Activated T-helper 2 cell treated with anti-CD3 and anti-CD28 coated beads, Interferon-gamma antibody, Interleukin-2, Interleukin-4, amounts not matched to agents 10 μg/mL and 5 μg/mL and 100 μg/mL, durations not matched to agents 14 hours and 24 hours and 36 hours (primary cell): ENCODE measurements at regions of chr19 and their contacts with region 1.

Region 1: GRCh38 chr19:44723952-44724319 is 24.6 kb upstream of the BCL3 start:
- DNase-seq: peak; percentile 72
- H3K4me3 Mint-ChIP-seq: no peak overlapping the region
- H3K27ac Mint-ChIP-seq: no peak overlapping the region
- H3K4me1 Mint-ChIP-seq: peaks cover 35% of the 10 kb centered on the region
- H3K27me3 Mint-ChIP-seq: no peaks in the 10 kb centered on the region

Region 2: GRCh38 chr19:44689056-44689895 is 34.7 kb before region 1 on chr19:
- intact Hi-C with region 1: loop called (anchors 2 kb)
- DNase-seq: peak; percentile 57
- H3K4me3 Mint-ChIP-seq: no peak overlapping the region
- H3K27ac Mint-ChIP-seq: no peak overlapping the region
- H3K4me1 Mint-ChIP-seq: peaks cover 38% of the 10 kb centered on the region
- H3K27me3 Mint-ChIP-seq: peaks cover 6% of the 10 kb centered on the region

Region 3: DNA sequence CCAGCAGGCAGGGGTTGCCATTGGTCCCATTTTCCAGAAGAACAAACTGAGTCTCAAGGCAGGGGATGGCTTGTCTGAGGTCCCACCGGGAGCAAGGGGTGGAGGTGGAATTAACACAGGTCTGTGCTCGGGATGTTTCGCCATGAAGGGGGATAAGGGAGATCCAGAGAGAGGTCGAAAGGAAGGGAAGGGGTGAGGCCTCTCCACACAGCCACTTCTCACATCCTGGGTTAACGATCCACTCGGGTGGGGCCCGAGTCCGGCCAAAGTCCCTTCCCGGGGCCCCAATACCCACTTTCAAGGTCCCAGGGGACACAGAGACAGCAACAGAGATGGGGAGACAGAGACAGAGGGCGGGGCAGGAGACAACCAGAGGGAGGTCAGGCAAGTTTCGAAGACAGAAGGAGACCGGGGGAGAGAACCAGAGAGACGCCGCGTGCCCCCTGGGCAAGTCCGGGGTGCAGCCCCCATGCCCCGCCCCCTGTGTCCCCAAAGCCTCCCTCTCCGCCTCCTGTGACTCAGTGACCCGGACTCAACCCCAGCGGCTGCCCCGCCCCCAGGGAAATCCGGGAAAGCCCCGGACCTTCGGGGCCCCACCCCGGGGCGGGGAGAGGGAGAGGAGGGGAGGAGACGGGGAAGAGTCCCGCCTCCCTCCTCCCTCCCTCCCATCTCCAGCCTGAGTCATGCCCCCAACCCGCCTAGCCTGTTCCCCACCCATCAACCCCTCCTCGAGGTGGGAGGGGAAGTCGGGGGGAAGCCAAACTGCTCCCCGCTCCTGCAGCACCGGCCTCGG is 23.2 kb after region 1 on chr19:
- intact Hi-C with region 1: loop called (anchors 1 kb)
- DNase-seq: peak; percentile 83
- H3K4me3 Mint-ChIP-seq: peak overlapping the region; percentile 92
- H3K27ac Mint-ChIP-seq: peak overlapping the region; percentile 97
- H3K4me1 Mint-ChIP-seq: peaks cover 46% of the 10 kb centered on the region
- H3K27me3 Mint-ChIP-seq: peaks cover 3% of the 10 kb centered on the region